ENCODE measurements at regions of chr12 and their contacts with region 1.

Region 1: GRCh38 chr12:31021809-31022494 is 51.7 kb upstream of the DDX11 start:
- DNase-seq: no peak
- ATAC-seq: no peak
- H3K4me3 ChIP-seq: no peak overlapping the region
- H3K27ac ChIP-seq: no peak overlapping the region
- H3K4me1 ChIP-seq: no peaks in the 10 kb centered on the region
- H3K27me3 ChIP-seq: no peaks in the 10 kb centered on the region
- CTCF ChIP-seq: no peak

Region 2: GRCh38 chr12:30796313-30796780 is 225.6 kb before region 1 on chr12:
- intact Hi-C with region 1: no loop called
- DNase-seq: peak in 3 of 4 donors; percentile 44 to 80 (median 46)
- ATAC-seq: peak; percentile 76
- H3K4me3 ChIP-seq: peak overlapping the region; percentile 49 to 65
- H3K27ac ChIP-seq: peak overlapping the region in 1 of 2 donors; percentile 51
- H3K4me1 ChIP-seq: peaks cover 5 to 25% of the 10 kb centered on the region in 2 donors
- H3K27me3 ChIP-seq: peaks cover 0 to 56% of the 10 kb centered on the region in 2 donors
- CTCF ChIP-seq: peak in 1 of 2 donors; percentile 17

Region 3: GRCh38 chr12:30970559-30971197 is 51.3 kb before region 1 on chr12:
- intact Hi-C with region 1: loop called in 1 of 2 experiments (anchors 5 kb)
- DNase-seq: peak in 2 of 4 donors; percentile 26 to 51
- ATAC-seq: no peak
- H3K4me3 ChIP-seq: no peak overlapping the region
- H3K27ac ChIP-seq: no peak overlapping the region
- H3K4me1 ChIP-seq: no peaks in the 10 kb centered on the region
- H3K27me3 ChIP-seq: peaks cover 0 to under 1% of the 10 kb centered on the region in 2 donors
- CTCF ChIP-seq: no peak

Region 4: DNA sequence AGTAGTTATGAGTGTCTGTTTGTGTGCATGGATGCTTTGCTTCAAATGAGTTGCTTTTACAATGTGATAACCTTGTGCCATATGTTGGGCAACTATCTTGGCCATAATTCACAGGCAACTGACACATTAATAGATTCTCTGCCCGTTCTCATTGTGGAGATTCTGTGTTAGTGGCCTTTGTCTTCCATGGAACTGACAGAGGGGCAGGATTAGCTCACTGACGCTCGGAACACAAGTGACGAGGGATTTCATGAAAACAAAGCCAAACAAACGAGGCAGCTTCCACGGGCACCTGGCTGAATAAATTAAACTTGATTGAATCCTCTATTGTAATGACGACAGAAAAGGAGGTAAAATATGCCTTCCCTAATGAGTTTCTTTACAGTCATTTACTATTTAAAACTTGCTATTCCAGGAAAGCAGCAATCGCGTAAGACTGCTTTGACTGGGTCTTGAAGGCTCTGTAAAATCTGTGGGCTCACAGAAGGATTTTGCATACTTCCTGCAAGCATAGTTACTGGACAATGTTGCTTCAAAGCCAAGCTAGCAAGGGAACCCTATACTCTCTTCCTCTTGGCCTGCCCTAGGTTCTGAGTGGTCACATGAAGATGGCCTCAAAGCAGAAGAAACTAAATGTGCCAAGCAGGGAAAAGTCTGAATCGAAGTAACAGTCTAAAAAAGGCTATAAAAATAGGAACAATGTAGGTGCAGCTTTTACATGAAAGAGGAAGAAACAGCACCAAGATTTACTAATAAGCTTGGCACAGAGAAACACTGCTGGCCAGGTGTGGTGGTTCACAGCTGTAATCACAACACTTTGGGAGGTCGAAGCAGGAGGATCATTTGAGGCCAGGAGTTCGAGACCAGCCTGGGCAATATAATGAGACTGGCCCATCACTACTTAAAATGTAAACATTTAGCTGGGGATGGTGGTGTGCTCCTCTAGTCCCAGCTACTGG is 332.1 kb after region 1 on chr12:
- intact Hi-C with region 1: no loop called
- DNase-seq: peak in 1 of 4 donors; percentile 15
- ATAC-seq: peak; percentile 55
- H3K4me3 ChIP-seq: no peak overlapping the region
- H3K27ac ChIP-seq: no peak overlapping the region
- H3K4me1 ChIP-seq: no peaks in the 10 kb centered on the region
- H3K27me3 ChIP-seq: no peaks in the 10 kb centered on the region
- CTCF ChIP-seq: no peak

Measured in left lung (tissue), 14 donors.